GM12878 (cell line): ENCODE measurements at regions of chr2 and their contacts with region 1.

Region 1: DNA sequence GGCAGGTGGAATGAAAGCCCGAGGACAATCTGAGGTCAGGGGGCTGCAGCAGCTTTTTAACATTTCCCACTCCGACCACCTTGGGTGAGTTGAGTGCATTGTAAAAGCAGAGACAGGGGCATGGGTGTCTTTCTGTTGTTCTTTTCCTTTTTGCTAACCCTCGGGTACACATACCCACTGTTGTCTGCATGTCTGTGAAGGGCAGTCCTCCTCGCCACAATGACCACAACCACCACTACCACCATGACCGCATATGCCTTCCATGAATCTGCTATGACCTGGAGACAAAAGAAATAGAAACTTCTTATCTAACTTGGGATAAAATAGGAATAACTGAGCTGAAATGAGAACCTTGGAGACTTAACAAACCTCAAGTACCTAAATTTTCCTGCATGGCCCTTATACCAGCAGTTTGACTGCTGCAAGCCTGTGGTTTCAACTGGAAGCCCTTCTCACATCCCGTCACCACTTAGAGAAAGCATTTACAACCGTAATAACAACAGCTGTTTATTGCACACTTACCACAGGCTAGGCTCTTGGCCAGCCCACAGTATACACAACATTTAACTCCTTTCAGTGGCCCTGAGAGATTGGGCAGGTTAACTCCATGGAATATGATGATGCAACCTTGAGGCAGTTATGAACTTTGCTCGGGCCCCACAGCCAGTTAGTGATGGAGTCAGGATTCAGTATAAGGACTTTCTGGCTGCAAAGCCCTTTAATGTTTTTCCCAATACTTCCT is 80.3 kb downstream of the GYPC start:
- DNase-seq: no peak
- ATAC-seq: no peak
- H3K4me3 ChIP-seq: no peak overlapping the region
- H3K27ac ChIP-seq: no peak overlapping the region
- H3K4me1 ChIP-seq: no peaks in the 10 kb centered on the region
- H3K27me3 ChIP-seq: no peaks in the 10 kb centered on the region
- CTCF ChIP-seq: no peak
- EP300 ChIP-seq: no peak
- POLR2A ChIP-seq: no peak
- RAD21 ChIP-seq: no peak

Region 2: GRCh38 chr2:126761981-126762878 is 25.9 kb after region 1 on chr2:
- CTCF ChIA-PET with region 1: no interaction called
- POLR2A ChIA-PET with region 1: no interaction called
- RAD21 ChIA-PET with region 1: no interaction called
- SMC1A ChIA-PET with region 1: no interaction called
- in situ Hi-C with region 1: no loop called
- intact Hi-C with region 1: loop called (anchors 2 kb)
- DNase-seq: no peak
- ATAC-seq: no peak
- H3K4me3 ChIP-seq: no peak overlapping the region
- H3K27ac ChIP-seq: no peak overlapping the region
- H3K4me1 ChIP-seq: no peaks in the 10 kb centered on the region
- H3K27me3 ChIP-seq: no peaks in the 10 kb centered on the region; a peak in 1 of 4 replicates
- CTCF ChIP-seq: no peak
- EP300 ChIP-seq: no peak
- POLR2A ChIP-seq: no peak
- RAD21 ChIP-seq: no peak

Region 3: DNA sequence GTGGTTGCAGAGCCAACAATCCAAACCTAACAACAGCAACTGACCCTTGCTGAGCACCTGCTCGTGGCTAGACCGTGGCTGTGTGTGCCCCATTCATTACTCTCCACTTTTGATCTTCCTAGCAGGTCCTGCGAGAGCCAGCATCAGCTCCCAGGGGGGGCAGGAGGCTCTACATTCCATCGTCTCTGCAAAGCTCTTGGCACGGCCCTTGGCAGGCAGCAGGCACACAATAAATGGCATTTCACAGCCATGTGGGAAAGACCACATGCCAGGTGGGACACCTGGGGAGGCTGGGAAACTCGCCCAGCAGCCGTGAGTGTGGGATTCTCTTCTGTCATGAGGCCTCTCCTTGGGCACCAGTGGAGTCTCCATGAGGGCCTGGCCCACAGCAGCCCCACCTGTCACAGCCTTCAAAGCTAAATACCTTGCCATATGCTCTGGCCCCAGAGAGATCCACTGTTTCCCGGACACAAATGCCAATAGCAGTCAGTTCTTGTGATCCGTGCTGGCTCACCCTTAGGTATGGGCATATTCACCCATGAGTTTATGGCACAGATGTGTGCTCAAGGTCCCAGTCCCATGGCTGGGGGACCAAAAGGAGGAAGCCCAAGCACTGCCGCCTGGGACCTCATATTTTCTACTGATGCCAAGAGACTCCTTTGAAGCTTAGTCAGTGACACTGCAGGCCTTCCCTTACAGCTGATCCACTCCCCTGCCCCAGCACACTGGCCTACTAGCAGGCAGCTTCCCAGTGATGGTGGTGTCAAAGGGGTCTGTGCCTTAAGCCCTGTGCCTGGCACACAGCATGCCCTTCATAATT is 155.6 kb after region 1 on chr2:
- CTCF ChIA-PET with region 1: no interaction called
- POLR2A ChIA-PET with region 1: no interaction called
- RAD21 ChIA-PET with region 1: no interaction called
- SMC1A ChIA-PET with region 1: no interaction called
- in situ Hi-C with region 1: no loop called
- intact Hi-C with region 1: no loop called
- DNase-seq: no peak
- ATAC-seq: no peak
- H3K4me3 ChIP-seq: no peak overlapping the region
- H3K27ac ChIP-seq: no peak overlapping the region
- H3K4me1 ChIP-seq: no peaks in the 10 kb centered on the region
- H3K27me3 ChIP-seq: peaks cover 0 to 1% of the 10 kb centered on the region in 2 experiments; a peak in 2 of 4 replicates
- CTCF ChIP-seq: no peak
- EP300 ChIP-seq: no peak
- POLR2A ChIP-seq: no peak
- RAD21 ChIP-seq: no peak

Region 4: DNA sequence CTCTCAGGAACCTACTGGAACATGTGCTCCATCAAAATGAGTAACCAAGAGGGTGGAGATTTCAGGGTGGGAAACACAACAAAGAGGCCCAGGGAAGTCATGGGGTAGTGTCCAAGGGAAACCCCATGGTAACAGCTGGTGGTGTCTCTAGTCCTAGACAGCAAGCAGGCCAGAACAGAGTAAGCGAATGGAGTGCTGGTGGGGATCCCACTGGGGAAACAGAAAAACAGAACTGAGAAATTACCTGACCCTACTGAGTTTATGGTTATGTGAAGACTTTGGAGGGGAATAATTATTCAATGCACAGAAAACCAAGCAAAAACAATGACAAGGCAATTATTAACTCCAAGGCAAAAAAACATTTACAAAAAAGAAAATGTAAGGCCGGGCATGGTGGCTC is 540.7 kb after region 1 on chr2:
- CTCF ChIA-PET with region 1: no interaction called
- POLR2A ChIA-PET with region 1: no interaction called
- RAD21 ChIA-PET with region 1: no interaction called
- SMC1A ChIA-PET with region 1: no interaction called
- in situ Hi-C with region 1: no loop called
- intact Hi-C with region 1: no loop called
- DNase-seq: peak; percentile 39
- ATAC-seq: peak; percentile 91
- H3K4me3 ChIP-seq: no peak overlapping the region
- H3K27ac ChIP-seq: 0 out of 2 replicates have a peak overlapping the region, but pooled peaks have one; percentile 9
- H3K4me1 ChIP-seq: peaks cover 6% of the 10 kb centered on the region; the same call in 1 of the 2 replicates
- H3K27me3 ChIP-seq: no peaks in the 10 kb centered on the region
- CTCF ChIP-seq: no peak
- EP300 ChIP-seq: 0 out of 4 replicates have a peak, but pooled peaks of 1 of the 2 experiments have one; percentile 18
- POLR2A ChIP-seq: no peak
- RAD21 ChIP-seq: no peak